Activated CD8-positive, alpha-beta T cell treated with anti-CD3 and anti-CD28 coated beads, Interleukin-2, amount 10 ng/mL, durations not matched to agents 7 days and 5 days (primary cell): ENCODE measurements at regions of chr19 and their contacts with region 1.

Region 1: GRCh38 chr19:33186431-33187182 is 7.5 kb upstream of the LRP3 start:
- DNase-seq: no peak
- ATAC-seq: no peak
- H3K4me3 Mint-ChIP-seq: no peak overlapping the region
- H3K27ac Mint-ChIP-seq: no peak overlapping the region
- H3K4me1 Mint-ChIP-seq: peaks cover 9% of the 10 kb centered on the region
- H3K27me3 Mint-ChIP-seq: peaks cover 8% of the 10 kb centered on the region

Region 2: DNA sequence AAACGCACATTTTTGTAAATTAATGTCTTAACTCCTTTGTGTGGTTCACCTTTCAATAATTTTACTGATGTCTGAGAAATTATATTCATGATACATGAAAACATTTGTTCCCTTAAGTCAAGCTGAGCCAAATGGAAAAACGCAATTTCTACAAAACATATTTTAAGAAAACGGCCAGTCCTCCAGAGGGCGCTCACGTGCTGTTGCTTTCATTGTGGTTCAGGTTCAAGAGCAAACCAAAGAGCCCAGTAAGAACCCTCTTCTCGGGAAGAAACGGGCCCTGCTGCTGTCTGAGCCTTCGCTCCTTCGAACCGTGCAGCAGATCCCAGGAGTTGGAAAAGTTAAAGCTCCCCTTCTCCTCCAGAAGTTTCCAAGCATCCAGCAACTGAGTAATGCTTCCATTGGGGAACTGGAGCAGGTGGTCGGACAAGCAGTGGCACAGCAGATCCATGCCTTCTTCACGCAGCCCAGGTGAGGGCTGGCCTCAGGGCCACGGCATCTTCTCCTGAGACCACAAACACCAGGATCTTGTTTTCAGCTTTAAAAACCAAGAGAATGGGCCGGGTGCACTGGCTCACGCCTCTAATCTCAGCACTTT is 210.3 kb before region 1 on chr19:
- CTCF ChIA-PET with region 1: interaction called, 15 read pairs
- POLR2A ChIA-PET with region 1: no interaction called
- DNase-seq: peak; percentile 86
- ATAC-seq: no peak
- H3K4me3 Mint-ChIP-seq: no peak overlapping the region
- H3K27ac Mint-ChIP-seq: no peak overlapping the region
- H3K4me1 Mint-ChIP-seq: peaks cover 11% of the 10 kb centered on the region
- H3K27me3 Mint-ChIP-seq: no peaks in the 10 kb centered on the region

Region 3: DNA sequence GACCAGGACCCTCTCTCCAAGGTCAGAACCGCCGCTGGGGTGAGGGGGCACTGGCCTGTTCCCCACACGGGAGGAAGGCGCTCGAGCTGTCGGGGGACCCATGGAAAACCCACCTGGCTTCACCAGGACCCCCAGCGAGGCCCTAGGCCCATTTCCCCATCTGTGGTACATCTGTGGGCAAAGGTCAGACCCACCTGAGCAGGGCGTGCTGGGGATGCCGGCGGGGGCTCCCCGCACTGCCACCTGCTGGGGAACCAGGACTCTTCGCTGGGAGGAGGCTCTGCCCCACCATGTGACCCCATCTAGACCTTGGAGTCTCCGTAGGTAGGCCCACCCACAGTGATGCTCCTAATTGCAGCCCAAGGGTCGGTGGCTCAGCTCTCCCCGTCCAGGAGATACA is 54.2 kb before region 1 on chr19:
- CTCF ChIA-PET with region 1: interaction called, 45 read pairs
- POLR2A ChIA-PET with region 1: interaction called, 3 read pairs
- DNase-seq: no peak
- ATAC-seq: no peak
- H3K4me3 Mint-ChIP-seq: no peak overlapping the region
- H3K27ac Mint-ChIP-seq: peak overlapping the region; percentile 9
- H3K4me1 Mint-ChIP-seq: peaks cover 5% of the 10 kb centered on the region
- H3K27me3 Mint-ChIP-seq: no peaks in the 10 kb centered on the region

Region 4: GRCh38 chr19:33143897-33144405 is 42.7 kb before region 1 on chr19:
- CTCF ChIA-PET with region 1: interaction called, 57 read pairs
- POLR2A ChIA-PET with region 1: no interaction called
- DNase-seq: peak; percentile 75
- ATAC-seq: peak; percentile 98
- H3K4me3 Mint-ChIP-seq: no peak overlapping the region
- H3K27ac Mint-ChIP-seq: no peak overlapping the region
- H3K4me1 Mint-ChIP-seq: peaks cover 7% of the 10 kb centered on the region
- H3K27me3 Mint-ChIP-seq: peaks cover 9% of the 10 kb centered on the region

Region 5: GRCh38 chr19:33156334-33156733 is 30.3 kb before region 1 on chr19:
- CTCF ChIA-PET with region 1: interaction called, 31 read pairs
- POLR2A ChIA-PET with region 1: no interaction called
- DNase-seq: no peak
- ATAC-seq: no peak
- H3K4me3 Mint-ChIP-seq: no peak overlapping the region
- H3K27ac Mint-ChIP-seq: no peak overlapping the region
- H3K4me1 Mint-ChIP-seq: peaks cover 38% of the 10 kb centered on the region
- H3K27me3 Mint-ChIP-seq: peaks cover 7% of the 10 kb centered on the region